Astrocyte of the cerebellum (primary cell): ENCODE measurements at regions of chr1 and their contacts with region 1.

Region 1: DNA sequence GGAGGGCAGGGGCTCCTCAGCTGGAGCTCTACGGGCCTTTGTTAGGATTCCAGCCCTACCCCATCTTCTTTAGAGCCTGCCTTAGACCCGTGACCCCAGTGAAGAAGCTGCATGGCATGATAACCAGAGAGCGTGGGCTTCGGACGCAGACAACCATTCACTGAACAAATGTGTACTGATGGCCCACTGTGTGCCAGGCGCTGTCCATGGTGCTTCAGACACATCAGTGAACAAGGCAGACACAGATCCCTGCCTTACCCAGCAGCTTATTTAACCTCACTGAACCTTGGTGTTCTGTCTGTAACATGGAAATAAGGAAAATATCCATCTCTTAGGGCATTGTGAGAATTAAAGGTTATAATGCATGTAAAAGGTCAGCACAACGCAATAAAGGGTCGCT is 9.5 kb downstream of the CHIT1 start:
- DNase-seq: no peak
- H3K4me3 ChIP-seq: no peak overlapping the region
- CTCF ChIP-seq: no peak

Region 2: GRCh38 chr1:203124546-203125317 is 95.2 kb before region 1 on chr1:
- in situ Hi-C with region 1: loop called (anchors 5 kb)
- DNase-seq: no peak
- H3K4me3 ChIP-seq: no peak overlapping the region
- CTCF ChIP-seq: no peak

Region 3: GRCh38 chr1:203148125-203148524 is 71.8 kb before region 1 on chr1:
- in situ Hi-C with region 1: no loop called
- DNase-seq: no peak
- H3K4me3 ChIP-seq: no peak overlapping the region
- CTCF ChIP-seq: peak; percentile 38

Region 4: GRCh38 chr1:203172128-203173010 is 47.6 kb before region 1 on chr1:
- in situ Hi-C with region 1: no loop called
- DNase-seq: peak; percentile 31
- H3K4me3 ChIP-seq: no peak overlapping the region
- CTCF ChIP-seq: peak; percentile 82

Region 5: DNA sequence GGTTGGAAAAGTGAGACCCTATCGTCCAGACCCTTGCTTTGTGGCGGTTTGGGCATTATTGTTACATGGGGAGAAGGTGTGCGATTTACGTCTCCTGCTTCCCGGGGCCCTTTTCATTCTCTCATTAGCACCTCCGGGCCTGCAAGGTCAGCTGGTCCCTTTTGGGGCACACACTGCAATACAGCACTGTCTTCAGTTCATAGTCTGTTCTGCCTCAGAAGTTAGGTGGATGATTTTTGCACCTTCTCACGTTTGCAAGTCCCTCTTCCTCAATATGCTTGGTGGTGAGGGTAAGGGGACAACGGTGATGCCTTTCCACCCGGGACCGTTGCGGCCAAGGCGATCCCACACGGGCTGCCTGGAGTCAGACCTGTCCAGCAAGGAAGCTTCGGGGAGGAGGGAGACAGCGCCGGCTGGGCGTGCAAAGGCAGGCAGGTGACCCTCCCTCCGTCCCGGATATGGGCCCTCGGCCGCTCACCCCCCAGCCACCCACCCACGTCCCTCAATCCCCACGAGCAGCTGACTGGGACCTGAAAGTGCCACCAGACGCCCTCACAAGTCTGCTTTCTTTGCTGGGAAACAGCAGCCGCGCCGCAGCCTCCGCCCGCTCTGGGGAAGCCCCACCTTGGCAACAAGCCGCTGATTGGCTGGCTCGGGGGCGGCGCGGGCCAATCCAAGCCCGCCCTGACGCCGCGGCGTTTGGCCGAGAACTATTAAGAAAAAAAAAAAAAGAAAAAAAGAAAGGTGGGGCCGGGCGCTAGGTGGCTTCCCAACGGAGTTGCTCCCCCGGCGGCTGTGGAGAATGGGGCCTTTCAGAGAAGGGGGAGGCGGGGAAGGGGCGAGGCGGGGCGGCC is 107.1 kb after region 1 on chr1:
- in situ Hi-C with region 1: no loop called
- DNase-seq: peak; percentile 65
- H3K4me3 ChIP-seq: peak overlapping the region; percentile 37
- CTCF ChIP-seq: no peak

Region 6: DNA sequence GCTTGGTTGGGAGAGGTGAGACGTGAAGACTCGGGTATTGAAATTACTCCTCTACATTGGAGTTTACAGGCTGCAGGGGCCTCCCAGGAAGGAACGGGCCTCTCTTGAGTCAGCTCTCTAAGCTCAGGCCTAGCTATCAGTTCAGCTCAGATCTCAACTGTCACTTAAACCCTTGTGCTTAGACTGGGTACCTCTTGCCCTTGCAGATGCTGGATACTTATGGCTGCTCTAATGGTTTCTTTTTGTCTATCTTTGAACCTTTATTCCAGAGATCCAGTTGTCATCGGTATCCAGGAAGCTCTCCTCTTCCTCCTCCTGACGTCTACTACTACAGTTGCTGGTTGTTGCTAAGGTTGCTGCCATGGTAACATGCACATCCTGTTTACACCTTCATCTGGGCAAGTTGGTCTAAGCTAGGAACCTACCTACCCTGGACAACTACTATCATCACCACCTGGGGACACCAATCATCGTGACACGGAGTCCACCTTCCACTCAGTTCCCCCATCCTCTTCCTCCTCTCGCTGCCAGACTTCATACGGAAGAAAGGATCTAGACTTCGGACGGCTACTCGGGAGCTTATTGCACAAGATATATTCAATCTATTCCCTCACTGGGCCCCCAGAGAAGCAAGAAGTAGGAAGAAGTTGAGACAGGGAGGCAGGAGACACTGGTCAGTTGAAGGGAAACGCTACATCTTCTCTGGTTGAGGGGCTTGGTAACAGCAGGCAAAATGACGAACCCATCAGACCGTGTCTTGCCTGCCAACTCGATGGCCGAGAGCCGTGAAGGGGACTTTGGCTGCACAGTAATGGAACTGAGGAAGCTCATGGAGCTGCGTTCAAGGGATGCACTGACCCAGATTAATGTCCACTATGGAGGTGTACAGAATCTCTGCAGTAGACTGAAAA is 462.8 kb after region 1 on chr1:
- in situ Hi-C with region 1: no loop called
- DNase-seq: no peak
- H3K4me3 ChIP-seq: no peak overlapping the region
- CTCF ChIP-seq: no peak